ENCODE measurements at regions of chr5 and their contacts with region 1.

Region 1: GRCh38 chr5:41903892-41904799 is at the start of gene RIMOC1:
- DNase-seq: peak; percentile 98 to 100
- H3K4me3 ChIP-seq: peak within 1 kb of the TSS; percentile 75 to 79
- H3K27ac ChIP-seq: peak within 1 kb of the TSS; percentile 87 to 94
- H3K4me1 ChIP-seq: peaks cover 3 to 6% of the 10 kb centered on the region in 2 donors
- H3K27me3 ChIP-seq: no peaks in the 10 kb centered on the region
- CTCF ChIP-seq: no peak
- total RNA-seq, gene RIMOC1: 11.1 TPM

Region 2: GRCh38 chr5:40834849-40835787 is 1069.0 kb before region 1 on chr5 and contains the start of gene RPL37:
- intact Hi-C with region 1: loop called (anchors 10 kb)
- DNase-seq: peak; percentile 80 to 98
- H3K4me3 ChIP-seq: peak within 1 kb of the TSS; percentile 70 to 75
- H3K27ac ChIP-seq: peak within 1 kb of the TSS; percentile 94 to 99
- H3K4me1 ChIP-seq: peaks cover 4 to 15% of the 10 kb centered on the region in 2 donors
- H3K27me3 ChIP-seq: no peaks in the 10 kb centered on the region
- CTCF ChIP-seq: no peak
- total RNA-seq, gene RPL37: 22.1 TPM

Region 3: DNA sequence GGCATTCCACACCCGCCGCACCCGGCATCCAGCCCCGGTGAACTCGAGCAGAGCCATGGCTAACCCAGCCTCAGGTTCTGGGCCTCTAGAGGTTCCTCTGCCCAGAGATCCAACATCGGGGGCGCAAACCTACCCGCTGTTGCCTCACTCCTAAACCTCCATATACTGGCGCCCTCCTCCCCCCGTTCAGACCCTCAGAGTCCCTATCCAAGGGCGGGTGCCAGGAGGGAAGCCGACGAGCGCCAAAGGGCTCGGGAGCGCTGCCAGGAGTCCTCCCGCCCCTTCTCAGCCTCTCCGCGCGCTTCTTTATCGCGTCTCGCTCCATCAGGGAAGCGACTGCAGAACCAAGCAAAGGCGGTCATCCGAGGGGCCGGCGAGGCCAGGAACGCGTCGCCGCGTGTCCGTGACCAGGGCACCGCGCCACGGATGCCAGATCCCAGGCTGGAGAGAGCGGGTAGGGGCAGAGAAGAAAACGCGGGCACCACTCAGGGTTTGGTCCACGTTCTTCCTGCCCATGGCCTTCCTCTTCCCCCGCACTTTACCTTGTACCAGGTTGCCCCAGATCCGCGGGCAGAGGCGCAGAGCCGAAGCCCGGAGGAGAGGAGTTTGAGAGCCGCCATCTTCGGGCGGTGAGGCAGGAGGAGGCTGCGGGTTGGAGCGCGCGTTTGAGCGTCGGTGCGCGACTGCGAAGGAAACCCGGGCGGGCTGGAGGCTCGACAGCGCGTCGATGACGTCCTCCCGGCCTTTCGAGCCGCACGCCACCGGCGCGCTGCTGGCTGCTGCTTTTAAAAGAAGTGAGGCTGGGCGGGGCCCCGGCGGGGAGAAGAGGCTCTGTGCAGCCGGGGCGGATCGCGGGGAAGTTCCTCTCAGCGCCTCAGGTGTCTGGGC is 34.2 kb before region 1 on chr5 and contains the start of gene OXCT1:
- intact Hi-C with region 1: loop called (anchors 1 kb)
- DNase-seq: peak; percentile 37 to 90
- H3K4me3 ChIP-seq: peak within 1 kb of the TSS; percentile 73 to 84
- H3K27ac ChIP-seq: peak within 1 kb of the TSS; percentile 95 to 97
- H3K4me1 ChIP-seq: peaks cover 0 to 20% of the 10 kb centered on the region in 2 donors
- H3K27me3 ChIP-seq: no peaks in the 10 kb centered on the region
- CTCF ChIP-seq: no peak
- total RNA-seq, gene OXCT1: 3.1 TPM

Region 4: GRCh38 chr5:41924872-41925554 is 20.9 kb after region 1 on chr5 and contains the start of gene FBXO4:
- intact Hi-C with region 1: loop called (anchors 1 kb)
- DNase-seq: peak; percentile 48 to 93
- H3K4me3 ChIP-seq: peak within 1 kb of the TSS; percentile 77 to 83
- H3K27ac ChIP-seq: peak within 1 kb of the TSS; percentile 96 to 100
- H3K4me1 ChIP-seq: peaks cover 0 to 10% of the 10 kb centered on the region in 2 donors
- H3K27me3 ChIP-seq: no peaks in the 10 kb centered on the region
- CTCF ChIP-seq: peak; percentile 49 to 79 (median 79)
- total RNA-seq, gene FBXO4: 0.64 TPM